Heart left ventricle (tissue), 16 donors: ENCODE measurements at regions of chr6 and their contacts with region 1.

Region 1: GRCh38 chr6:90285611-90286381 is 10.8 kb downstream of the BACH2 start:
- DNase-seq: peak; percentile 82 to 94 (median 87)
- ATAC-seq: peak; percentile 99 to 100 (median 100)
- H3K4me3 ChIP-seq: peak overlapping the region in 8 of 12 donors; percentile 14 to 52 (median 37)
- H3K27ac ChIP-seq: peak overlapping the region in 10 of 12 donors; percentile 10 to 76 (median 63)
- H3K4me1 ChIP-seq: peaks cover 4 to 38% (median 22%) of the 10 kb centered on the region in 12 donors
- H3K27me3 ChIP-seq: no peaks in the 10 kb centered on the region
- CTCF ChIP-seq: no peak
- POLR2A ChIP-seq: no peak

Region 2: DNA sequence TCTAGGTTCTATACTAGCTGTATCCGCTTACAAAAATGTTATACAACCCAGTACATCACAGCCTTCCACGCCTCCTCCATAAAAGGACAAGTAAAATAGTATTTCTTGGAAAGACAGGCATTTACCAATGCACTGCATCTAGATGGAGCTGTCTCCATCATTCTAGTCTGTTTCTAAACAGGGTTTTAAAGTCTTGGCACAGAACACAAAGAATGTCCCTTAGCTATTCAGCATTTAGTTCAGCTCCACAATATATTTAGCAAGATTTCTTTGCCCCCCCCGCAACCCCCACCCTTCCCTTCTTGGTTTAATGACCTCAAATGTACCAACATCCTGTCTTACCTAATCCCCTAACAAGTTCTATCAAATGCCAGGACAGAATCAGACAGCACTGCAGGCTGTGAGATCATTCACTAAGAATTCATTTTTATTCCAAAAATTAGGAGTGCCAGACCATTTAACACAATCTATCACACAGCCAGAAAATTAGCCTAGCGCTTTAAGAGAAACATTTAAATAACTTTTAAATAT is 187.7 kb before region 1 on chr6:
- intact Hi-C with region 1: loop called in 3 of 10 experiments (anchors 10 kb)
- DNase-seq: peak in 4 of 5 donors; percentile 29 to 57 (median 50)
- ATAC-seq: peak; percentile 85 to 94 (median 88)
- H3K4me3 ChIP-seq: no peak overlapping the region
- H3K27ac ChIP-seq: peak overlapping the region in 11 of 12 donors; percentile 44 to 84 (median 68)
- H3K4me1 ChIP-seq: peaks cover 0 to 43% (median 22%) of the 10 kb centered on the region in 12 donors
- H3K27me3 ChIP-seq: no peaks in the 10 kb centered on the region
- CTCF ChIP-seq: peak in 11 of 12 donors; percentile 3 to 66 (median 42)
- POLR2A ChIP-seq: no peak

Region 3: DNA sequence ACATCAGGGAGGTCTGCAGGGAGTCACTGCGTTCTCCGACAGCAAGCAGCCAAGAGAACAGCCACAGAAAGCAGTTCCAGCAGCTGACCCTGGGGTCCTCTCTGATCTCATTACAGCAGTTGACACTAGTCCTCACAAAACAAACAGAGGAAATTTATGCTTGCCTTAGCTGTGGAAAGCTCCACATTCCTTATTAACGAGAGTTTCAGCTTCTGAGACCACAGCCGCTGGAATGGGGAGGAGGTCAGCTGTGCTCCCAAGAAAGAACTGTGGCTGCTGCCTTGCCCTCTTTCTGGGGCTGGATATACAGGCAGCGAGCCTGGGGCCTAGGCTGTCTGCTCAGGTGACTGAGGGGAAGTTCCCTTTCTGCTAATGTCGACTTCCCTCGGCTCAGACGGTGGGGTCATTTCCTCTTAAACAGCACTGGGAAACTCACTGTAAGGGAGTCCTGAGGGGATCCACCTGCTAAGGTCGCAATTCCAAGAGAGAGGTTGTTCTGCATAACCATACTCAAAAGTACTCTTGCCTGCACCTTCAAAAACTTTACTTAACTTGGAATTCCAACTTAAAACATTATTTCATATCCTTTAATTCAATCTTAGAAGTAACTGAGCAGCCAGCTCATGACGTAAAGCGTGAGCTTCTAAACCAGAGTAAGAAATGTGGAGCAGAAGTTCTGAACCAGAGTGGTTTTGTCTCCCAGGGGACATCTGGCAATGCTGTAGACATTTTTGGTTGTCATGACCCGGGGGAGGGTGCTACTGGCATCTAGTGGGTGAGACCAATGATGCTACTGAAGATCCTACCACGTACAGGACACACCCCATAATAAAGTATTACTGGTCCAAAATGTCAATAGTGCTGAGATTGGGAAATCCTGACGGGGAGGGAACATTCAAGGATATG is 69.5 kb before region 1 on chr6:
- intact Hi-C with region 1: loop called in 6 of 10 experiments (anchors 2 to 5 kb)
- DNase-seq: peak in 1 of 5 donors; percentile 16
- ATAC-seq: no peak
- H3K4me3 ChIP-seq: no peak overlapping the region
- H3K27ac ChIP-seq: peak overlapping the region in 7 of 12 donors; percentile 12 to 88 (median 36)
- H3K4me1 ChIP-seq: peaks cover 0 to 56% (median 37%) of the 10 kb centered on the region in 12 donors
- H3K27me3 ChIP-seq: no peaks in the 10 kb centered on the region
- CTCF ChIP-seq: no peak
- POLR2A ChIP-seq: no peak

Region 4: GRCh38 chr6:90230548-90231215 is 55.1 kb before region 1 on chr6:
- intact Hi-C with region 1: loop called in 3 of 10 experiments (anchors 5 to 10 kb)
- DNase-seq: no peak
- ATAC-seq: peak in 3 of 4 donors; percentile 40 to 52 (median 52)
- H3K4me3 ChIP-seq: no peak overlapping the region
- H3K27ac ChIP-seq: peak overlapping the region in 3 of 12 donors; percentile 16 to 38 (median 26)
- H3K4me1 ChIP-seq: peaks cover 0 to 48% (median 24%) of the 10 kb centered on the region in 12 donors
- H3K27me3 ChIP-seq: no peaks in the 10 kb centered on the region
- CTCF ChIP-seq: no peak
- POLR2A ChIP-seq: no peak

Region 5: GRCh38 chr6:90241229-90241880 is 44.4 kb before region 1 on chr6:
- intact Hi-C with region 1: loop called in 2 of 10 experiments (anchors 5 to 10 kb)
- DNase-seq: peak in 2 of 5 donors; percentile 29 to 39
- ATAC-seq: peak in 3 of 4 donors; percentile 31 to 67 (median 45)
- H3K4me3 ChIP-seq: no peak overlapping the region
- H3K27ac ChIP-seq: no peak overlapping the region
- H3K4me1 ChIP-seq: peaks cover 0 to 25% (median 5%) of the 10 kb centered on the region in 12 donors
- H3K27me3 ChIP-seq: no peaks in the 10 kb centered on the region
- CTCF ChIP-seq: no peak
- POLR2A ChIP-seq: no peak

Region 6: DNA sequence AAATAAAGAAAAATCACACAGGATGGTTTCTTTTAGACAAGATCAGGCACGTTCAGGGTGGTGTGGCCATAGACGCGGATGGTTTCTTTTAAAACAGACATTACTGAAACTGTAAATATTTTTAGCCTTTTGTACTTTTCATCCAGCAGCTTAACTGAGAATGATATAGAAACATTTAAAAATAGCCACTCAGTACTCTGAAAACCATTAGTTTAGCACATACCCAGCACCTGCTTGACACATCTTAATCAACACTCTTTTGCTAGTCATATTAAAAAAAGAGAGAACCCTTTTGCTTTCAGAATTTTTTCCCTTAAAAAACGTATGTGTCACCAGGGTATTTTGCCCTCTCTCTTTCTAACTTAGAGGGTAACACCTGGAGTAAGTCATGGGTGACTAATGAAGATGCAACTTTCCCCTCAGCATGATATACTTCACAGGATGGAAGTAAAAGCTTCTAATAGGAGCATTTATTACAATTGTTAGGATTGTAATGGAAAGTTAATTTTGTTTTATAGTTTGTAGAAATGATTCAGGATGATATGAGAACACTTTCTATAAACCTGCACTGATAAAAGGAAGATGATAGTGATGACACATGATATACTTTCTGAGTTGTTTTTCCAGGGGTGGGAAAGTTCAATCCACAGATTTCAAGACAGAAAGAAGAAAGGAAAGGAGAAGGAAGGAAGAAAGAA is 34.4 kb before region 1 on chr6:
- intact Hi-C with region 1: no loop called
- DNase-seq: no peak
- ATAC-seq: no peak
- H3K4me3 ChIP-seq: no peak overlapping the region
- H3K27ac ChIP-seq: no peak overlapping the region
- H3K4me1 ChIP-seq: no peaks in the 10 kb centered on the region
- H3K27me3 ChIP-seq: no peaks in the 10 kb centered on the region
- CTCF ChIP-seq: no peak
- POLR2A ChIP-seq: no peak

Region 7: GRCh38 chr6:90386399-90387382 is 100.9 kb after region 1 on chr6:
- intact Hi-C with region 1: loop called in 1 of 10 experiments (anchors 5 kb)
- DNase-seq: peak in 1 of 5 donors; percentile 18
- ATAC-seq: peak in 3 of 4 donors; percentile 75 to 78 (median 76)
- H3K4me3 ChIP-seq: no peak overlapping the region
- H3K27ac ChIP-seq: no peak overlapping the region
- H3K4me1 ChIP-seq: peaks cover 0 to 3% (median 0%) of the 10 kb centered on the region in 12 donors
- H3K27me3 ChIP-seq: no peaks in the 10 kb centered on the region
- CTCF ChIP-seq: no peak
- POLR2A ChIP-seq: no peak